Naive thymus-derived CD4-positive, alpha-beta T cell (primary cell): ENCODE measurements at regions of chr20 and their contacts with region 1.

Region 1: GRCh38 chr20:33401184-33401920 is at the start of gene CDK5RAP1:
- DNase-seq: peak; percentile 62 to 84 (median 82)
- ATAC-seq: peak; percentile 98
- H3K4me3 ChIP-seq: peak within 1 kb of the TSS; percentile 93
- H3K4me3 Mint-ChIP-seq: peak within 1 kb of the TSS; percentile 92 to 99 (median 98)
- H3K27ac ChIP-seq: peak within 1 kb of the TSS; percentile 80
- H3K27ac Mint-ChIP-seq: peak within 1 kb of the TSS; percentile 89 to 94 (median 92)
- H3K4me1 ChIP-seq: peaks cover 23 to 33% of the 10 kb centered on the region in 2 donors
- H3K4me1 Mint-ChIP-seq: peaks cover 36 to 71% (median 64%) of the 10 kb centered on the region in 7 donors
- H3K27me3 ChIP-seq: no peaks in the 10 kb centered on the region
- H3K27me3 Mint-ChIP-seq: no peaks in the 10 kb centered on the region
- total RNA-seq, gene CDK5RAP1: 33.6 to 51.8 (median 49.4) TPM

Region 2: GRCh38 chr20:33373735-33374605 is 27.4 kb before region 1 on chr20:
- CTCF ChIA-PET with region 1: interaction called, 3 read pairs
- POLR2A ChIA-PET with region 1: no interaction called
- intact Hi-C with region 1: loop called in 1 of 2 experiments (anchors 2 kb)
- DNase-seq: no peak
- ATAC-seq: no peak
- H3K4me3 ChIP-seq: no peak overlapping the region
- H3K4me3 Mint-ChIP-seq: no peak overlapping the region
- H3K27ac ChIP-seq: no peak overlapping the region
- H3K27ac Mint-ChIP-seq: peak overlapping the region in 2 of 9 donors; percentile 26 to 42
- H3K4me1 ChIP-seq: peaks cover 16 to 17% of the 10 kb centered on the region in 2 donors
- H3K4me1 Mint-ChIP-seq: peaks cover 5 to 57% (median 33%) of the 10 kb centered on the region in 7 donors
- H3K27me3 ChIP-seq: no peaks in the 10 kb centered on the region
- H3K27me3 Mint-ChIP-seq: no peaks in the 10 kb centered on the region

Region 3: GRCh38 chr20:33489495-33490022 is 88.2 kb after region 1 on chr20:
- CTCF ChIA-PET with region 1: interaction called, 3 read pairs
- POLR2A ChIA-PET with region 1: interaction called, 3 read pairs
- intact Hi-C with region 1: loop called in 1 of 2 experiments (anchors 1 kb)
- DNase-seq: peak; percentile 97 to 99 (median 99)
- ATAC-seq: peak; percentile 97
- H3K4me3 ChIP-seq: peak overlapping the region; percentile 75
- H3K4me3 Mint-ChIP-seq: peak overlapping the region; percentile 84 to 95 (median 88)
- H3K27ac ChIP-seq: peak overlapping the region; percentile 94
- H3K27ac Mint-ChIP-seq: peak overlapping the region; percentile 86 to 96 (median 90)
- H3K4me1 ChIP-seq: peaks cover 4 to 9% of the 10 kb centered on the region in 2 donors
- H3K4me1 Mint-ChIP-seq: peaks cover 0 to 30% (median 13%) of the 10 kb centered on the region in 7 donors
- H3K27me3 ChIP-seq: no peaks in the 10 kb centered on the region
- H3K27me3 Mint-ChIP-seq: no peaks in the 10 kb centered on the region